Activated T-helper 2 cell treated with anti-CD3 and anti-CD28 coated beads, Interferon-gamma antibody, Interleukin-2, Interleukin-4, amounts not matched to agents 10 μg/mL and 5 μg/mL and 100 μg/mL, durations not matched to agents 14 hours and 24 hours and 36 hours (primary cell): ENCODE measurements at regions of chr3 and their contacts with region 1.

Region 1: GRCh38 chr3:189394599-189395121 is 222.9 kb downstream of the TPRG1 start:
- DNase-seq: no peak
- H3K4me3 Mint-ChIP-seq: peak overlapping the region; percentile 6
- H3K27ac Mint-ChIP-seq: peak overlapping the region; percentile 84
- H3K4me1 Mint-ChIP-seq: peaks cover 40% of the 10 kb centered on the region
- H3K27me3 Mint-ChIP-seq: no peaks in the 10 kb centered on the region

Region 2: DNA sequence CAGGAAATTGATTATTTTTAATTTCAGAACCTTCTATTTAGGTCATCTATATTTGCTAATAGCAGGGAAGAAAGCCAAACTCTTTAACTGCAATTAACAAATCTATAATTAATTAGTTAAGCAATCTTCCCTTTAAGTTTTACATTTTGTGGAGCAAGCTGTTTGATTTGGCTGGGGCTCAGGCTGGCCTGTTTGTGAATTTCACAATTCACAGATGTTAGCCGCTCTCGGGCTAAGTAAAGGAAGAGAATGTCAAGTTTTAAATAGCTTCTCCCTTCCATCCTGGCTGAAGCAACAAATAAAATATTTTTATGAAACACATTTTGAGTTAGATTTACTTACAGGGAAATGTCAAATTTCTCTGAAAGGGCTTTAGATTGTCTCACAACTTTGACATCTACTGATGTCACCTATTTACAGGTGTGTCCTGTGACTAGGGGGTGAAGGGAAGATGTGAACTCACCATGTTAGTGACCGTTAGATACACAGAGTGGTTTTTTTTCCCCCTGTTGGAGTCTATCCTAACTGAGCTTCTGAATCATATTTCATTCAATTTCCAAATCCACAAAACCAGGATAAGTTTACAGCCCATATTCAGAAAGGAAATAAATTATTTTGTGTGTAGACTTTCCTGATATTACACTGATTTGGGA is 235.3 kb after region 1 on chr3:
- intact Hi-C with region 1: loop called (anchors 10 kb)
- DNase-seq: no peak
- H3K4me3 Mint-ChIP-seq: peak overlapping the region; percentile 41
- H3K27ac Mint-ChIP-seq: peak overlapping the region; percentile 50
- H3K4me1 Mint-ChIP-seq: peaks cover 47% of the 10 kb centered on the region
- H3K27me3 Mint-ChIP-seq: no peaks in the 10 kb centered on the region